Thyroid gland (tissue), 4 donors: ENCODE measurements at regions of chr12 and their contacts with region 1.

Region 1: GRCh38 chr12:47949441-47950308 is 13.7 kb upstream of the TMEM106C start:
- DNase-seq: peak; percentile 75 to 80
- H3K4me3 ChIP-seq: no peak overlapping the region
- H3K27ac ChIP-seq: no peak overlapping the region
- H3K4me1 ChIP-seq: peaks cover 0 to 5% of the 10 kb centered on the region in 2 donors
- H3K27me3 ChIP-seq: no peaks in the 10 kb centered on the region
- CTCF ChIP-seq: peak; percentile 71 to 83 (median 77)
- POLR2A ChIP-seq: no peak

Region 2: DNA sequence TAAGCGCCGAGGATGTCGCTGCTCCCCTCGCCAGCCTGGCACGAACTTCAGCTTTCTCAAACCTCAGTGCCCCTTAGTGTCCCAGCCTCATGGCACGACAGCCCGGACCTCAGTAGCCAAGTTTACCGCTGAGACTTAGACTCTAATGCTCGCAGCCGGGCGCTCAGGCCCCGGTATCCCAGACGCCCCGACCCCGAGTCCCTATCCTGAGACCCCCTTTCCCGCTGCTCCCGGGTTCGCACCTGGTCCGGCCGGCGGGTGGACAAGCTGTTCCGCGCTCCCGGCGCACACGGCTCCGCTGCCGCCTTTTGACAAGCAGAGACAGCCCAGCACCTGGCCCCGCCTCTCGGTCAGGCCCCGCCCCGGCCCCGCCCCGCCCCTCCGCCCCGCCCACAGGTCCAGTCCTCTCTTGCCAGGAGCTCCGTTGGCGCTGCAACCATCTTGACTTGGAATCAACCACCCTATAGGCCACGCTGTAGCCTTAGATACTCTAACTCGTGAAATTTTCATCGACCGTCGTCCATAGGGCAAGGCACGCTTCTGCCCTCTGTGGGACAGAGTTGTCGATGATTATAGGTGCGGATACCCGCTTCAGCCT is 44.9 kb before region 1 on chr12 and contains the start of gene VDR:
- intact Hi-C with region 1: loop called (anchors 5 kb)
- DNase-seq: peak; percentile 84 to 85
- H3K4me3 ChIP-seq: peak within 1 kb of the TSS; percentile 44 to 91 (median 81)
- H3K27ac ChIP-seq: peak within 1 kb of the TSS; percentile 68 to 74 (median 73)
- H3K4me1 ChIP-seq: peaks cover 9 to 11% of the 10 kb centered on the region in 2 donors
- H3K27me3 ChIP-seq: no peaks in the 10 kb centered on the region
- CTCF ChIP-seq: no peak
- POLR2A ChIP-seq: peak in 1 of 2 donors; percentile 73
- total RNA-seq, gene VDR: 3.5 to 5.2 (median 3.9) TPM